Activated CD4-positive, alpha-beta T cell treated with anti-CD3 and anti-CD28 coated beads, Interleukin-2, amount 10 ng/mL, durations not matched to agents 24 days and 14 days (primary cell): ENCODE measurements at regions of chr5 and their contacts with region 1.

Region 1: DNA sequence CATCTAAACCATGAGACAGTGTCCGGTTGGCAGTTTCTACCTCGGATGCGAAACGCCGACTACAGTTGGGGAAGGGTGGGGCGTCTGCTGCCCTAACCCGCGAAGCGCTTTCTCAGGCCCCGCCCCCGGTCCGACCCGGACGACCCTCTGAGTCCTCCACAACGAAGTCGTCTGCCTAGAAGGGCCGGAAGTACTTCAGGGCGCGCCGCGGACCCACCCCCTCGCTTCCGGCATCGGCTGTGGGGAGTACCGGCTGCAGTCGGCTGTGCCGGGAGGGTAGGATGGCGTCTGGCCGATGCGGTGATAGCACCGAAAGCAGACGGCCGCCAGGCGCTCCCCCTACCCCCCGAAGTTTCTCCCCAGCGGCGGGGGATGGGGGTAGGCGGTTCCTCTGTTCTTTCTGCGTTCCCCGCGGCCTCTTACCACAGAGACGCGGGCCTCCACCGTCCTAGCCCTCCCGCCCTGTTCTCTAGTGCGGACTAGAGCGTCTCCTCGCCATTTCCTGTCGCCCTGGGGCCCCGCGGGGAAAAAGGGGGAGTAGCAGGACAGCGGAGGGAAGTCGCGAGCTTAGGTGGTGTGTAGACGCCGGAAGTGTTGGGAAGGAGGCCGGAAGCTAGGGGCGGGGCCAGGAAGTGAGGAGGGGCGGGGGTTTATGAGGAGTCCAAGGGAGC is at the start of gene TRIM41:
- DNase-seq: peak; percentile 99
- H3K4me3 Mint-ChIP-seq: peak within 1 kb of the TSS; percentile 98
- H3K27ac Mint-ChIP-seq: peak within 1 kb of the TSS; percentile 99
- H3K4me1 Mint-ChIP-seq: peaks cover 53% of the 10 kb centered on the region
- H3K27me3 Mint-ChIP-seq: peaks cover 5% of the 10 kb centered on the region
- total RNA-seq, gene TRIM41: 31.6 and 35.2 TPM in 2 replicates

Region 2: DNA sequence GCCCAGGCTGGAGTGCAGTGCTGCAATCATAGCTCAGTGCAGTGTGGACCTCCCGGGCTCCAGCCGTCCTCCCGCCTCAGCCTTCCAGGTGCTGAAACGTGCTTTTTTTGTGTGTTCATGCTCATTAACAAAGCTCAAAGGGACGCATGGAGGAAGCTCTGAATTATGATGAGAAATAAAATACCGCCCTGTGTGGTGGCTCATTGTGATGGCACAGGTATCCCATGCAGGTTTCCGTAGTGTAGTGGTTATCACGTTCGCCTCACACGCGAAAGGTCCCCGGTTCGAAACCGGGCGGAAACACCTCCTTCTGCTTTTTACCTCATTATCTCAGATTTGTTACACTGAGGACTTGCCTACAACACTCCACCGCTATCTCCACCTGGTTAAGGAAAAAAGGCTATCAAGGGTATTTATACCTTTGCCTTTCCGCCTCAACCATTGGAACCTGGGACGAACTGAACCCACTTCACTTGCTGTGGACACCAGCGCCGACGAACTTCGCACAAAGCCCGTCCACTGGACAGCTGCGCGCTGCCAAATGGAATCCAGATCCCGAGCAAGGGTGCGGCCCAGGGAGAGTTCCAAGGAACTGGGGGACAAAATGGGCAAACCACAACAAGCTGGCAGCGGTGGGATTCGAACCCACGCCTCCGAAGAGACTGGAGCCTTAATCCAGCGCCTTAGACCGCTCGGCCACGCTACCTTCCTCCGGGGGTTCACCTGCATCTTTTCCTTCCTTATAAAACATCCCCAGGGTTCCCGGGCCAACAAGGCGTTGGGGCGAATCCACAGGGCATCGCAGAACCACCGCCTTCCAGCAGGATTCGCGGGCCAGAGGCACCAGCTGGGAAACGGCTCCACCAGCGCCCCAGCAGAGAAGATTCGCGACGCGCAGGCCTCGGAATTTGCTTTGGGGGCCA is 49.5 kb before region 1 on chr5:
- intact Hi-C with region 1: loop called (anchors 2 kb)
- DNase-seq: peak; percentile 88
- H3K4me3 Mint-ChIP-seq: peak overlapping the region; percentile 85
- H3K27ac Mint-ChIP-seq: peak overlapping the region; percentile 91
- H3K4me1 Mint-ChIP-seq: peaks cover 37% of the 10 kb centered on the region
- H3K27me3 Mint-ChIP-seq: peaks cover 43% of the 10 kb centered on the region

Region 3: GRCh38 chr5:181191529-181192394 is 31.4 kb before region 1 on chr5:
- intact Hi-C with region 1: loop called (anchors 1 kb)
- DNase-seq: peak; percentile 99
- H3K4me3 Mint-ChIP-seq: peak overlapping the region; percentile 92
- H3K27ac Mint-ChIP-seq: peak overlapping the region; percentile 95
- H3K4me1 Mint-ChIP-seq: peaks cover 40% of the 10 kb centered on the region
- H3K27me3 Mint-ChIP-seq: peaks cover 10% of the 10 kb centered on the region

Region 4: GRCh38 chr5:181207214-181208107 is 15.7 kb before region 1 on chr5:
- intact Hi-C with region 1: loop called (anchors 1 kb)
- DNase-seq: peak; percentile 92
- H3K4me3 Mint-ChIP-seq: peak overlapping the region; percentile 91
- H3K27ac Mint-ChIP-seq: peak overlapping the region; percentile 91
- H3K4me1 Mint-ChIP-seq: peaks cover 31% of the 10 kb centered on the region
- H3K27me3 Mint-ChIP-seq: peaks cover 28% of the 10 kb centered on the region

Region 5: DNA sequence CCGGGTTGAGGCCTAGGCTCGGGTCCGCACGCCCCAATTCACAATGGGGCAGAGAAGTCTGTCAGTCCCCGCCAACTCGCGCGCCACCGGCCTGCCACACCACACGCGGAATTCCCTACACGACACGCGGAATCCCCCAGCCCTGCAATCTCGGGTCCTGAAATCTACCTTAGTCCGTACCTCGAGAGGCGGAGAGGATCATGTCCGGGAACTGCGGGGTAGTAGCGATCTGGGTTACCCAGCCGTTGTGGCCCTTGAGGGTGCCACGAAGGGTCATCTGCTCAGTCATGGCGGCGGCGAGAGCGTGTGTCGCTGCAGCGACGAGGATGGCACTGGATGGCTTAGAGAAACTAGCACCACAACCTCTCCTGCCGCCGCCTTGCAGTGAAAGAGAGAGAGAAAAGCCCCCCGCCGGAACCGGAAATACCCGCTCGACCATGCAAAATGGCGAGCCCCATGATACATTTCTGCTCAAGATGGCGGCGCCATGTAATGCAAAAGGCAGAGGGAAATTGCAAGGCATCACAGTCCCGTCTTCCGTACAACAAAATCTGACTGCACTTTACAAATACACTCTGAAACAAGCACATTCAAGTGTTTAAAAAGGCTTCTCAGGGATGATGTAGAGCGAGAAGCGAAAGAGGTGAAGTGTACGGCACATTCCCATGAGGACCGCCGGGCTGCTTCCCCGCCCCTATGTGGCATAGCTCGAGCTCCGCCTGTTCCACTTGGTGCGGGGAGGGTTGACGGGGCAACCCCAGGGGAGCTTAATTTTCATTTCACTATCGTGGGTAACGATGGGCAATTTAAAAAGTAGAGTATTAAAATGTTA is 20.5 kb after region 1 on chr5 and contains the start of gene RACK1:
- intact Hi-C with region 1: loop called (anchors 1 kb)
- DNase-seq: peak; percentile 96
- H3K4me3 Mint-ChIP-seq: peak within 1 kb of the TSS; percentile 98
- H3K27ac Mint-ChIP-seq: peak within 1 kb of the TSS; percentile 99
- H3K4me1 Mint-ChIP-seq: peaks cover 49% of the 10 kb centered on the region
- H3K27me3 Mint-ChIP-seq: no peaks in the 10 kb centered on the region
- total RNA-seq, gene RACK1: 2,172 and 2,196 TPM in 2 replicates